ENCODE measurements at regions of chr2 and their contacts with region 1.

Region 1: GRCh38 chr2:179546656-179547055 is 282.0 kb upstream of the SESTD1 start:
- DNase-seq: no peak
- ATAC-seq: no peak
- H3K4me3 ChIP-seq: no peak overlapping the region
- H3K4me3 Mint-ChIP-seq: no peak overlapping the region
- H3K27ac ChIP-seq: no peak overlapping the region
- H3K27ac Mint-ChIP-seq: no peak overlapping the region
- H3K4me1 ChIP-seq: no peaks in the 10 kb centered on the region
- H3K4me1 Mint-ChIP-seq: no peaks in the 10 kb centered on the region
- H3K27me3 ChIP-seq: no peaks in the 10 kb centered on the region
- H3K27me3 Mint-ChIP-seq: no peaks in the 10 kb centered on the region
- CTCF ChIP-seq: no peak

Region 2: GRCh38 chr2:179558010-179558934 is 11.6 kb after region 1 on chr2:
- CTCF ChIA-PET with region 1: no interaction called
- POLR2A ChIA-PET with region 1: no interaction called
- intact Hi-C with region 1: loop called (anchors 1 to 2 kb)
- DNase-seq: no peak
- ATAC-seq: no peak
- H3K4me3 ChIP-seq: no peak overlapping the region
- H3K4me3 Mint-ChIP-seq: no peak overlapping the region
- H3K27ac ChIP-seq: no peak overlapping the region
- H3K27ac Mint-ChIP-seq: no peak overlapping the region
- H3K4me1 ChIP-seq: no peaks in the 10 kb centered on the region
- H3K4me1 Mint-ChIP-seq: no peaks in the 10 kb centered on the region
- H3K27me3 ChIP-seq: no peaks in the 10 kb centered on the region
- H3K27me3 Mint-ChIP-seq: no peaks in the 10 kb centered on the region
- CTCF ChIP-seq: no peak